Left cardiac atrium (tissue), 4 donors: ENCODE measurements at regions of chr19 and their contacts with region 1.

Region 1: GRCh38 chr19:12139885-12140547 is at the start of gene ZNF20:
- DNase-seq: peak; percentile 97
- ATAC-seq: peak; percentile 99 to 100
- total RNA-seq, gene ZNF20: 0.89 to 1.1 TPM

Region 2: GRCh38 chr19:11798391-11799330 is 341.4 kb before region 1 on chr19 and contains the start of gene ZNF491:
- intact Hi-C with region 1: loop called in 1 of 2 experiments (anchors 5 kb)
- DNase-seq: peak; percentile 96
- ATAC-seq: peak; percentile 99 to 100
- total RNA-seq, gene ZNF491: 1.6 to 2.2 TPM

Region 3: GRCh38 chr19:11881151-11881800 is 258.7 kb before region 1 on chr19:
- intact Hi-C with region 1: loop called (anchors 1 to 5 kb)
- DNase-seq: peak; percentile 45
- ATAC-seq: peak; percentile 79 to 85

Region 4: DNA sequence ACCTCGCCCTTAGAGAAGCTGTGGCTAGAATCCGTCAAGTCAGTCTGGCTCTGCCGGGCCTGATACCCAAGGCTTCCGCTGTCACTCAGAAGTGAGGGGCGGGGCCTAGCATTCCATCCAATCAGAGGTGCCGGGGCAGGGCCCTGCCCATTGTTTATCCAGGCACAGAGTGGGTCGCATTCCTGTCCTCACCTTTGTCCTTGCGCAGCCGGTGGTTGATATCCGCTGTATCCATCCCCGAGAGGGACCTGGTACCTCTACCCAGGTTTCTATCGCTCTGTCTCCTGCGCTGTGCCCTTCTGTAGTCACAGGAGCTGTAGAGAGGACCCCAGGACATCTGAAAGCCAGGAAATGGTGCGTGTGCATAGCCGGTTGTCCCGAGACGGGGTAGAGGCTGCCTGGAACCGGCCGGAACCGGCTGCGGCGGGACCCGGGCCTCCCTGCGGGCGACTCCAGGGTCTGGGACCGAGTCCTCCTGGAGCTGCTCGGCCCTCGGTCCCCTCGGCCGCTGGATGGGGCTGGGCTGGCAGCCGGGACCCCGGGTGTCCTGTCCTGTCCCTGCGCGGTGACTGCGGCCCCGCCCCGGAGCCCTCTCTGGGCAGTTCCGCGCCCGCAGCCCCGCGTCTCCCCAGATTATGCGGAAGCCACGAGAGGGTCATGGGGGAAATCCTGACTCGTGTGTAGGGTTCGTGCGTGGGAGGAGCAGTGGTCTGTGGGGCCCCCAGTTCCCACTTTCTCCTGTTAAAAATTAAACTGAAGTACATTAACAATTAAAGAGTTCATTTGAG is 175.0 kb before region 1 on chr19 and contains the start of gene ZNF763:
- intact Hi-C with region 1: loop called in 1 of 2 experiments (anchors 5 kb)
- DNase-seq: peak; percentile 95
- ATAC-seq: peak; percentile 97 to 99
- total RNA-seq, gene ZNF763: 1.5 to 3.4 TPM

Region 5: GRCh38 chr19:12047868-12048267 is 92.1 kb before region 1 on chr19:
- intact Hi-C with region 1: no loop called
- DNase-seq: no peak
- ATAC-seq: no peak

Region 6: GRCh38 chr19:12064590-12065538 is 75.2 kb before region 1 on chr19 and contains the start of gene ZNF844:
- intact Hi-C with region 1: loop called in 1 of 2 experiments (anchors 5 kb)
- DNase-seq: peak; percentile 98
- ATAC-seq: peak; percentile 99
- total RNA-seq, gene ZNF844: 10.5 to 11.6 TPM

Region 7: DNA sequence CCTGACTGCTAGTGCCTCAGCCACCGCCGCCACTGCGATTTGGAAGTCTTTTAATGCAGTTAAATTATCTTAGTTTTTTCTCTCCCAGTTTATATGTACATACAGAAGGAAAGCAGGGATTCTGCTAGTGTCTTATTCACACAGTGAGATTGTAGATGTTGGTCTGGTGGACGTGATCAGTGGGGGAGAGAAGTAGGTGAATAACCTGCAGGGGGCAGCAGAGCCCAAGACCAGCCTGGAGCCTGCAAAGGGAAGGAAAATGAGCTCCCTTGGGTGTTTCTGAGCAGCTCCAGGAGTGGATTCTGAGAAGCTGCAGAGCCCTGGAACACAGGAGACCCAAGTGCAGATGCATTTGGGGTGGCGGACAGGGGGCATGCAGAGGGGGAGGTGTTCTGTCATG is 49.2 kb before region 1 on chr19:
- intact Hi-C with region 1: loop called in 1 of 2 experiments (anchors 2 kb)
- DNase-seq: peak; percentile 68
- ATAC-seq: peak; percentile 53 to 66